HCT116 (cell line): ENCODE measurements at regions of chr3 and their contacts with region 1.

Region 1: GRCh38 chr3:58305882-58306711 is at the starts of genes HTD2 and RPP14:
- DNase-seq: peak; percentile 97
- ATAC-seq: peak; percentile 87
- H3K4me3 ChIP-seq: peak within 1 kb of the TSS; percentile 75 to 99
- H3K27ac ChIP-seq: peak within 1 kb of the TSS; percentile 89
- H3K4me1 ChIP-seq: peaks cover 0 to 17% of the 10 kb centered on the region in 2 experiments; a peak in 3 of 4 replicates
- H3K27me3 ChIP-seq: no peaks in the 10 kb centered on the region
- CTCF ChIP-seq: peak; percentile 84 to 98 (median 88)
- POLR2A ChIP-seq: peak; percentile 26
- RAD21 ChIP-seq: peak; percentile 49
- total RNA-seq, gene HTD2: 13.5 TPM
- total RNA-seq, gene RPP14: 22.4 TPM

Region 2: DNA sequence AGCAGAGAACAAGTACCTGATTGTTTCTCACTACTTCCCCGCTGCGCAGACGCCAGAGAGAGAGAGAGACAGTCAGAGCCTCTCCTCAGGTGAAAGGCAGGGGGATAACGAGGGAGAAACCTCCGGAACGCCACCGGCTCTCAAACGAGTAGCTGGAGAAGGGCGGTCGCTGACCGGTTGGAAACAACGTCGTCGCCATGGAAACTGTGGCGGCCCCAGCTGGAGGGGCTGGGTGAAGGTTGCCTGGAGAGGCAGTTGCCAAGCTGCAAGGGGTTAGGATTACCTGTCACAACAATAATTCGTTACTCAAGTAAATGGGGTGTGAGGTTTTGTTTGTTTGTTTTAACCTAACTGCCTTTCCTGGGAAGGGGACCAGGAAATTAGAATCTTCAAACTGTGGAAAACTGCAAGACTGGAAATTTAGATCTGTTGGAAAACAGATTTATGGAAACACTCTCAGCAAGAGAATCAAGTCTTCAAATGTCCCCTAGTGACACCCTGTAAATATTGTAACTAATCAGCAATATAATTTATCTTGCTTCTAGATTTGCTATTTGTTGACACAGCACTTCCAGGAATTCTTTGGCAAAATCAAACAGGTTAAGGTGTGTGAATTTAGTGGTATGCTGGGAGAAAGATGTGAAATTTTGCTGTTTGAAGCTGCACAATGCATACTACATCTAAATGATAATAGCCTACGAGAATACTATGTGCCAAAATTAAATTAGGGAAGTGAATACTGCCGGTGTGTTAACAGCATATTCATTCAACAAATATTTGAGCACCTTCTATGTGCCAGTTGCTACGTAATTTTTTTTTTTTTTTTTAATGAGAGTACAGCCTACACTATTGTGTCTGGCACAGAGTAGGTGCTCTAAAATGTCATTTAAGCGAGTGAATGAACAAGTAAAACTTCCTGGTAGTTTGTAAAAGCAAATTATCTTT is 761.6 kb before region 1 on chr3 and contains the start of gene DNAH12:
- CTCF ChIA-PET with region 1: no interaction called
- POLR2A ChIA-PET with region 1: no interaction called
- RAD21 ChIA-PET with region 1: no interaction called
- intact Hi-C with region 1: no loop called
- DNase-seq: no peak
- ATAC-seq: peak; percentile 46; the same call in 1 of the 2 replicates
- H3K4me3 ChIP-seq: 0 out of 4 replicates have a peak within 1 kb of the TSS, but pooled peaks of 1 of the 2 experiments have one; percentile 7
- H3K27ac ChIP-seq: no peak within 1 kb of the TSS
- H3K4me1 ChIP-seq: peaks cover 0 to 5% of the 10 kb centered on the region in 2 experiments; a peak in 1 of 4 replicates
- H3K27me3 ChIP-seq: no peaks in the 10 kb centered on the region
- CTCF ChIP-seq: no peak
- POLR2A ChIP-seq: no peak
- RAD21 ChIP-seq: no peak
- total RNA-seq, gene DNAH12: not detected

Region 3: DNA sequence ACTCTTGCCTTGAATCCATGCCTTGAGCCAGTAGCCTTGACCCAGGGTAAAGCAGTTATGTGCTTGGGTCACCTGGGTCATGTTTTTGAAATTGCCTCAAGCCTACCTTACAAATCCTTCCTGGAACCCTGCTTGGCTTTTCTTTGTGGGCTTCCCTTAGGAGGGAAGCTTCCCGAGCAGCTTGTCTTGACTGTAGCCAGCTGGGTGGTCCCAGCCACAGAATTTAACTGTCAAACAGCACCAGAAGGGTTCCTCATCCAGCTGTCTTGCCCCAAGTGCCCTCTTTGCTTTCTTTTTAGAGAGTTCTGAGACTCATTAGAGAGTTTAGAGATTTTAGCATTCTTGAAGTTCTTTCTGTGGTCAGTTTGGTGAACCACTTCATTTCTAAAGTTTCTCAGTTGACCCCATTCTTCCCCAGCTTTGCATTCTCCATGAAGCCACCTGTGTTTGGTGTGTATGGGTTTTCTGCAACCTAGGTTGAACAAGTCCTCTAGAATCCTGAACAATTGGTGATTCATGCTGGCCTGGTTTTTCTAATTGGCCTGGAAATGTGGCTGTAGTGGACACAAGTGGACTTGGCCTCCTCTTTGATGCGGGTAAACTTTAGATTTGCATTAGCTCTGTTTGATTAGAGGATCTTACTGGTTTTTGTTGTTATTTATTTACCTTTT is 264.3 kb before region 1 on chr3:
- CTCF ChIA-PET with region 1: no interaction called
- POLR2A ChIA-PET with region 1: no interaction called
- RAD21 ChIA-PET with region 1: no interaction called
- intact Hi-C with region 1: no loop called
- DNase-seq: no peak
- ATAC-seq: no peak
- H3K4me3 ChIP-seq: no peak overlapping the region
- H3K27ac ChIP-seq: no peak overlapping the region
- H3K4me1 ChIP-seq: peaks cover 33 to 72% of the 10 kb centered on the region in 2 experiments
- H3K27me3 ChIP-seq: no peaks in the 10 kb centered on the region
- CTCF ChIP-seq: no peak
- POLR2A ChIP-seq: no peak
- RAD21 ChIP-seq: no peak

Region 4: DNA sequence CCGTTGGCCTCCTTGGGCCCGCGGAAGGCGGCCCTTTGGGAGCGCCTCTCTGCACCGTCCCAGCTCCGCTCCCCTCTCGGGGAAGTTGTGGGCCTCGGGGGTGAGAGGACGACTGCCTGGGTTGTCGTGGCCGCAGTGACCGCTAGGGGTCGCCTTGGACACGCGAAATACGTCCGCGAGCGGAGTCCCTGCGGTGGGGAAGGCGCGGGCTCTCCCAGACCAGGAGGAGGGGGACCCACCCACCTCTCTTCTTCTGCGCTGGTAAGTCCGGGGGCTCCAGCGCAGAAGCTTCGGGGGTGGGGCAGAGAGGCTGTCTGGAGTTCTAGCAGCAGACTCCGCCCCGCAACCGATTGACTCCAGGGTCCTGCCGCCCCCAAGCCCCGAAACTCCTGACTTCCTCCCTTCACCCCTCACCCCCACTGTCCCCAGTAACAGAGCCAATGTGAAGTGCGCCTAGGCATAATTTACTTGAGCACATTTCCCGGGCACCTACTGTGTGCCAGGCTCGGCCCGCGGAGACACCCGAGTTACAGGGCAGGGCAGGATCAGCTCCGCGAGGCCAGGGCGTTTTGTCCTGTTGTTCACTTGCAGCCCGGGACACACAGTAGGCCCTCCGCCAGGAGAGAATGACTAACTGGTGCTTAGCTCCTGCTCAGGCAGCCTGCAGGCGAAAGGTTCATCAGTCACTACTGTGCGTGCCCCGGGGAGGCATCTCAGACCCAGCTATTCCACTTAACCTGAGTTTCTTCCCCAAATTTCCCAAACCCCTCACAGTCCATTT is 128.2 kb before region 1 on chr3:
- CTCF ChIA-PET with region 1: interaction called, 31 read pairs
- POLR2A ChIA-PET with region 1: interaction called, 4 read pairs
- RAD21 ChIA-PET with region 1: interaction called, 3 read pairs
- intact Hi-C with region 1: no loop called
- DNase-seq: peak; percentile 51
- ATAC-seq: peak; percentile 89
- H3K4me3 ChIP-seq: peak overlapping the region; percentile 43 to 51
- H3K27ac ChIP-seq: no peak overlapping the region; the same call in 1 of the 2 replicates
- H3K4me1 ChIP-seq: peaks cover 19 to 51% of the 10 kb centered on the region in 2 experiments; a peak in 3 of 4 replicates
- H3K27me3 ChIP-seq: no peaks in the 10 kb centered on the region
- CTCF ChIP-seq: peak; percentile 76 to 87 (median 87)
- POLR2A ChIP-seq: no peak
- RAD21 ChIP-seq: peak; percentile 83

Region 5: GRCh38 chr3:58217209-58217811 is 88.8 kb before region 1 on chr3:
- CTCF ChIA-PET with region 1: interaction called, 20 read pairs
- POLR2A ChIA-PET with region 1: interaction called, 4 read pairs
- RAD21 ChIA-PET with region 1: interaction called in 1 of 2 experiments, 3 read pairs
- intact Hi-C with region 1: no loop called
- DNase-seq: peak; percentile 90
- ATAC-seq: peak; percentile 97
- H3K4me3 ChIP-seq: peak overlapping the region in 1 of 2 experiments; percentile 46; a peak in 3 of 4 replicates
- H3K27ac ChIP-seq: peak overlapping the region; percentile 49
- H3K4me1 ChIP-seq: peaks cover 18 to 38% of the 10 kb centered on the region in 2 experiments
- H3K27me3 ChIP-seq: no peaks in the 10 kb centered on the region
- CTCF ChIP-seq: peak; percentile 81 to 90 (median 83)
- POLR2A ChIP-seq: no peak
- RAD21 ChIP-seq: peak; percentile 55

Region 6: GRCh38 chr3:58317811-58318210 is 11.7 kb after region 1 on chr3:
- CTCF ChIA-PET with region 1: interaction called, 12 read pairs
- POLR2A ChIA-PET with region 1: no interaction called
- RAD21 ChIA-PET with region 1: no interaction called
- intact Hi-C with region 1: no loop called
- DNase-seq: no peak
- ATAC-seq: no peak
- H3K4me3 ChIP-seq: no peak overlapping the region
- H3K27ac ChIP-seq: no peak overlapping the region
- H3K4me1 ChIP-seq: no peaks in the 10 kb centered on the region
- H3K27me3 ChIP-seq: no peaks in the 10 kb centered on the region
- CTCF ChIP-seq: no peak
- POLR2A ChIP-seq: no peak
- RAD21 ChIP-seq: no peak

Region 7: DNA sequence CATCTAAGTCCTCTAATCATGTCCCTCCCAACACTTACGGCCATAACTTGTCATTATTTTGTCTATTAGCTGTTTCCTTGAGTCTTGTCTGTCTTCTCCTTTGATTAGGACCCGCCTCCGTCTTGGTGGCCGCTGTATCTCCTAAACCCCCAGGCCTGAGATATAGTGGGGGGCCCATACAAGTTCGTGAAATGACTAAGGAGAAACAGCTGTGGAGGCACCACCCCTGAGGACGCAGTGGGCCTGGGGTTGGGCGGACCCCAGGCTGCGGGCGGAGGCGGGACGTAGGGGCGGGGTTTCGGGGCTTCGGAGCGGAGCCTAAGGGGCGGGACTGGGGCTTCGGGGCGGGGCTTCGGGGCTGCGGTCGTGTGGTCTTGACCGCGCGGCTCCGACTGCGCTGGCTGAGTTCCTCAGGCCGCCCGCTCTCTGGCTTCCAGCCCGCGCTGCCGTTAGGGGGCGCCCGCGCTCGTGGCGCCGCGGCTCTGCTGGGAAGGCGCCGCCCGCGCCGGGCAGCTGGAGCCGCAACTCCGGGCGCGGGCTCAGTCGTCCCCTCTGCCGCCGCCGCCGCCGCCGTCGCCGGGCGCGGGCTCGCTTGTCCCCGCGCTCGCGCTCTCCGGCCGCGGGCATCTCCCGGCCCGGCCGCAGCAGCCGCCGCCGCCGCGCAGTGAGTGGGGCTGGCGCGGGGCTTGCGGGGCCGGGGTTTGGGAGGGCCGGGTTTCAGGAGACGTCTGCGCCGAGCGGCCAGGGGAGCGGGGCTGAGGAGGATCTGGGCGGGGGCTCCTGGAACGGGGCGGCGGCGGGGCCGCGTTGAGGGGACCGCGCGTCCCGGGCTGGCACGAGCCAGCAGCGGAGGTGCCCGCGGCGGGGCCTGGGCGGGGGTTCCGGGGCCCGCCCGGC is 185.7 kb after region 1 on chr3 and contains the start of gene KCTD6:
- CTCF ChIA-PET with region 1: interaction called, 12 read pairs
- POLR2A ChIA-PET with region 1: interaction called, 3 read pairs
- RAD21 ChIA-PET with region 1: no interaction called
- intact Hi-C with region 1: no loop called
- DNase-seq: peak; percentile 85
- ATAC-seq: peak; percentile 94
- H3K4me3 ChIP-seq: peak within 1 kb of the TSS; percentile 77 to 85
- H3K27ac ChIP-seq: peak within 1 kb of the TSS; percentile 65
- H3K4me1 ChIP-seq: peaks cover 19 to 38% of the 10 kb centered on the region in 2 experiments
- H3K27me3 ChIP-seq: no peaks in the 10 kb centered on the region
- CTCF ChIP-seq: peak; percentile 47 to 68 (median 66); a peak in 5 of 6 replicates
- POLR2A ChIP-seq: peak; percentile 37
- RAD21 ChIP-seq: peak; percentile 69
- total RNA-seq, gene KCTD6: 12.0 TPM

Region 8: DNA sequence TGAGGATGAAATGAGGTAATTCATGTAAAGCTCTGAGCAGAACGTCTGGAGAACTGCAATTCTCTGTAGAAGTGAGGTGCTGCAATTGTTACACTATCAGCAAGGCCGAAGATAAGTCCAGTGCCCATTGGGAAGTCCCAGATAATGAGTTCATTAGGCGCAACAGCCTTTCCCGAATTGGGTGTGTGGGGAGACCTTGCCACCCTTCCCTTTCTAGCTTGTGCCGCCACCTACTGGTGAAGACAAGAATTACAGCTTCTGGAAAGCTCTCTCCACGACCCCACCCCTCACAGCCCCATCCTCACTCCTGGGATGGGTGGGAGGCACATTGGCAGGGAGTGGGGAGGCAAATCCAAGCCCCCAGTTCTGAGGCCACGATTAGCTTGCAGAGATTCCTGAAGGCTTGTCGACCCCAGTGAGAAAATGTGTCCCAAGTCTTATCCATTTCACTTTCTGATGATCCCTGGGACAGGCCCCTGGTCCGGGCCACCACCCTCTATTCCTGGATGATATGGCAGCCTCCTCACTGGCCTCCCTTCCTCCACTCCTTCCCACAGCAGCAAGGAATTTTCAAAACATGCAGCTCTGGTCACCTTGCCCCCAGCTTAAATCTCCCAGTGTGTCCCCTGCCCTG is 324.1 kb after region 1 on chr3:
- CTCF ChIA-PET with region 1: interaction called, 20 read pairs
- POLR2A ChIA-PET with region 1: no interaction called
- RAD21 ChIA-PET with region 1: no interaction called
- intact Hi-C with region 1: loop called (anchors 1 kb)
- DNase-seq: peak; percentile 29
- ATAC-seq: peak; percentile 93
- H3K4me3 ChIP-seq: no peak overlapping the region
- H3K27ac ChIP-seq: no peak overlapping the region
- H3K4me1 ChIP-seq: peaks cover 0 to 3% of the 10 kb centered on the region in 2 experiments; a peak in 1 of 4 replicates
- H3K27me3 ChIP-seq: no peaks in the 10 kb centered on the region
- CTCF ChIP-seq: peak; percentile 82 to 92 (median 89)
- POLR2A ChIP-seq: no peak
- RAD21 ChIP-seq: peak; percentile 96